Sciatic nerve (tissue), 2 donors: ENCODE measurements at regions of chr2 and their contacts with region 1.

Region 1: GRCh38 chr2:182836451-182836850 is 30.0 kb downstream of the FRZB start:
- DNase-seq: no peak
- ATAC-seq: no peak

Region 2: GRCh38 chr2:182814380-182814779 is 22.1 kb before region 1 on chr2:
- intact Hi-C with region 1: loop called (anchors 1 kb)
- DNase-seq: no peak
- ATAC-seq: no peak